ENCODE measurements at regions of chr6 and their contacts with region 1.

Region 1: GRCh38 chr6:99241905-99242534 is 107.5 kb downstream of the FAXC start:
- DNase-seq: peak; percentile 34
- CTCF ChIP-seq: peak; percentile 69

Region 2: GRCh38 chr6:99143108-99143861 is 98.7 kb before region 1 on chr6:
- in situ Hi-C with region 1: loop called (anchors 10 kb)
- DNase-seq: no peak
- CTCF ChIP-seq: no peak

Region 3: GRCh38 chr6:99416892-99417767 is 175.1 kb after region 1 on chr6:
- in situ Hi-C with region 1: no loop called
- DNase-seq: peak; percentile 17
- CTCF ChIP-seq: no peak

Region 4: GRCh38 chr6:99467509-99468106 is 225.6 kb after region 1 on chr6:
- in situ Hi-C with region 1: no loop called
- DNase-seq: peak; percentile 44
- CTCF ChIP-seq: peak; percentile 61

Region 5: GRCh38 chr6:99501762-99502161 is 259.7 kb after region 1 on chr6:
- in situ Hi-C with region 1: no loop called
- DNase-seq: no peak
- CTCF ChIP-seq: no peak